ENCODE measurements at regions of chr1 and their contacts with region 1.

Region 1: GRCh38 chr1:113835642-113836307 is 23.5 kb upstream of the RSBN1 start:
- DNase-seq: no peak
- ATAC-seq: peak; percentile 44
- H3K4me3 ChIP-seq: no peak overlapping the region
- H3K27ac ChIP-seq: no peak overlapping the region
- H3K4me1 ChIP-seq: no peaks in the 10 kb centered on the region
- H3K27me3 ChIP-seq: no peaks in the 10 kb centered on the region

Region 2: DNA sequence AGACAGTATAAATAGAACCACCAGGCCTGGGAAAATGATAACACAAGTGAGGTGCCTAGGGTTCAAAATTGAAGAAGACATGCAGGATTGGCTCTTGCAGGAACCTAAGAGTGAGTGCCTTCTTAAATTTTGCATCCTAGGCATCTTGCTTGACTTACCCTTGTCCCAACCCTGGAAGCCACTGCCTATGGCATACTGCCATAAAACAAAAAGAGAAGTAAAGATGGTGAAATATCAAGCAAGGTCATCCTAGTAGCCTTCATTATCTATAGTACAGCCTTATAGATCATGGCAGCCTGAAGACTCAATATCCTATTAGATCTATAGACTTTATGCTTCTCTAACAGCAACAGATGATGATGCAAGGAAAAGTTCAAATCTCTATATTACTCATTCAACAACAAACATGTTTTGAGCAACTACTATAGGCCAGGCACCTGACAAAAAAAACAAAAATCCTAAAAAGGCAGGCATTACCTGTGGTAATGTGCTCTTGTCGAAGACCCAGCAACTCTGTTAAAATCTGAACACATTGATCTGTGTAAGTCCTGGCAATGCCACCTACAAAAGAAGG is 62.6 kb after region 1 on chr1:
- intact Hi-C with region 1: loop called in 1 of 2 experiments (anchors 5 kb)
- DNase-seq: no peak
- ATAC-seq: no peak
- H3K4me3 ChIP-seq: no peak overlapping the region
- H3K27ac ChIP-seq: peak overlapping the region in 1 of 2 donors; percentile 58
- H3K4me1 ChIP-seq: peaks cover 0 to under 1% of the 10 kb centered on the region in 2 donors
- H3K27me3 ChIP-seq: no peaks in the 10 kb centered on the region

Region 3: DNA sequence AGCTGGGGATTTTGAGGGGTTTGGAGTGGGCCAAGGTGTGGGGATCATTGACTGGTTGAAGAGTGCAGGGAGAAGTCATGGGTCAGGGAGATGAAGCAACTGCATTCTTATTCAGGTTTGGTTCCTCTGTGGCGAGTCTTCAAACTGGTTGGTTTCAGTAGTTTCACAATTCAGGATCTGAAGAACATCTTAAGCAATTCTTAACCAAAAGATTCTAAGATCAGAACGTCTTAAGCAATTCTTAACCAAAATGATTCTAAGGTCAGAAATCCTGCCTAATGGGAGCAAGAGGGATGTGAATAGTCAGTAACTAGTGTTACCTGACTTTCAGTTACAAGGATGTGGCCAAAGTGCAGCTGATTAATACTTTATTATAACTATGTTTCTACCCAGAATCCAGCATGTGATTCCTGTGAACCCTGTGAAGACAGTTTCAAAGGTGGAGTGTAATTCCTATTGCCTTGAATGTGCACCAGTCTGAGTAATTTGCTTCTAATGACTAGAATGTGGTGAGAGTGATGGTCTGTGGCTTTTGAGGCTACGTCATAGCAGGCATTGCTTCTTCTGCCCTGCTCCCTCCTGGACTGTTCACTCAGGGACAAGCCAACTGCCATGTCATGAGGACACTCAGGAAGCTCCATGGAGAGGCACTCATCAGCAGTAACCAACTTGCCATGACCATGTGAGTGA is 204.7 kb after region 1 on chr1:
- intact Hi-C with region 1: no loop called
- DNase-seq: no peak
- ATAC-seq: no peak
- H3K4me3 ChIP-seq: no peak overlapping the region
- H3K27ac ChIP-seq: no peak overlapping the region
- H3K4me1 ChIP-seq: no peaks in the 10 kb centered on the region
- H3K27me3 ChIP-seq: no peaks in the 10 kb centered on the region

Measured in aorta (tissue), 5 donors.